ENCODE measurements at regions of chr13 and their contacts with region 1.

Region 1: GRCh38 chr13:98142380-98143156 is at the start of gene FARP1:
- DNase-seq: no peak
- ATAC-seq: peak; percentile 89
- H3K4me3 ChIP-seq: peak within 1 kb of the TSS; percentile 60; the same call in 1 of the 2 replicates
- H3K27ac ChIP-seq: no peak within 1 kb of the TSS
- H3K4me1 ChIP-seq: no peaks in the 10 kb centered on the region
- H3K27me3 ChIP-seq: peaks cover 4 to 7% of the 10 kb centered on the region in 2 experiments; a peak in 3 of 4 replicates
- CTCF ChIP-seq: peak in 2 of 3 experiments; percentile 13 to 45; a peak in 3 of 6 replicates
- EP300 ChIP-seq: no peak
- POLR2A ChIP-seq: no peak
- RAD21 ChIP-seq: no peak
- polyA plus RNA-seq, gene FARP1: 0.20 to 0.52 TPM

Region 2: GRCh38 chr13:98004111-98004510 is 138.5 kb before region 1 on chr13:
- CTCF ChIA-PET with region 1: no interaction called
- POLR2A ChIA-PET with region 1: no interaction called
- RAD21 ChIA-PET with region 1: no interaction called
- SMC1A ChIA-PET with region 1: no interaction called
- in situ Hi-C with region 1: no loop called
- intact Hi-C with region 1: no loop called
- DNase-seq: no peak
- ATAC-seq: no peak
- H3K4me3 ChIP-seq: no peak overlapping the region
- H3K27ac ChIP-seq: no peak overlapping the region
- H3K4me1 ChIP-seq: no peaks in the 10 kb centered on the region
- H3K27me3 ChIP-seq: no peaks in the 10 kb centered on the region
- CTCF ChIP-seq: no peak
- EP300 ChIP-seq: no peak
- POLR2A ChIP-seq: no peak
- RAD21 ChIP-seq: no peak

Region 3: GRCh38 chr13:98026457-98026857 is 116.1 kb before region 1 on chr13:
- CTCF ChIA-PET with region 1: no interaction called
- POLR2A ChIA-PET with region 1: no interaction called
- RAD21 ChIA-PET with region 1: no interaction called
- SMC1A ChIA-PET with region 1: no interaction called
- in situ Hi-C with region 1: no loop called
- intact Hi-C with region 1: no loop called
- DNase-seq: no peak
- ATAC-seq: no peak
- H3K4me3 ChIP-seq: no peak overlapping the region
- H3K27ac ChIP-seq: no peak overlapping the region
- H3K4me1 ChIP-seq: no peaks in the 10 kb centered on the region
- H3K27me3 ChIP-seq: no peaks in the 10 kb centered on the region
- CTCF ChIP-seq: no peak
- EP300 ChIP-seq: no peak
- POLR2A ChIP-seq: no peak
- RAD21 ChIP-seq: no peak

Region 4: GRCh38 chr13:98118865-98119264 is 23.7 kb before region 1 on chr13:
- CTCF ChIA-PET with region 1: no interaction called
- POLR2A ChIA-PET with region 1: no interaction called
- RAD21 ChIA-PET with region 1: no interaction called
- SMC1A ChIA-PET with region 1: no interaction called
- in situ Hi-C with region 1: no loop called
- intact Hi-C with region 1: no loop called
- DNase-seq: no peak
- ATAC-seq: no peak
- H3K4me3 ChIP-seq: no peak overlapping the region
- H3K27ac ChIP-seq: no peak overlapping the region
- H3K4me1 ChIP-seq: no peaks in the 10 kb centered on the region
- H3K27me3 ChIP-seq: no peaks in the 10 kb centered on the region
- CTCF ChIP-seq: no peak
- EP300 ChIP-seq: no peak
- POLR2A ChIP-seq: no peak
- RAD21 ChIP-seq: no peak

Region 5: GRCh38 chr13:98169331-98169730 is 26.8 kb after region 1 on chr13:
- CTCF ChIA-PET with region 1: no interaction called
- POLR2A ChIA-PET with region 1: no interaction called
- RAD21 ChIA-PET with region 1: no interaction called
- SMC1A ChIA-PET with region 1: no interaction called
- in situ Hi-C with region 1: no loop called
- intact Hi-C with region 1: no loop called
- DNase-seq: no peak
- ATAC-seq: no peak
- H3K4me3 ChIP-seq: no peak overlapping the region
- H3K27ac ChIP-seq: no peak overlapping the region
- H3K4me1 ChIP-seq: no peaks in the 10 kb centered on the region
- H3K27me3 ChIP-seq: no peaks in the 10 kb centered on the region
- CTCF ChIP-seq: no peak
- EP300 ChIP-seq: no peak
- POLR2A ChIP-seq: no peak
- RAD21 ChIP-seq: no peak

Region 6: DNA sequence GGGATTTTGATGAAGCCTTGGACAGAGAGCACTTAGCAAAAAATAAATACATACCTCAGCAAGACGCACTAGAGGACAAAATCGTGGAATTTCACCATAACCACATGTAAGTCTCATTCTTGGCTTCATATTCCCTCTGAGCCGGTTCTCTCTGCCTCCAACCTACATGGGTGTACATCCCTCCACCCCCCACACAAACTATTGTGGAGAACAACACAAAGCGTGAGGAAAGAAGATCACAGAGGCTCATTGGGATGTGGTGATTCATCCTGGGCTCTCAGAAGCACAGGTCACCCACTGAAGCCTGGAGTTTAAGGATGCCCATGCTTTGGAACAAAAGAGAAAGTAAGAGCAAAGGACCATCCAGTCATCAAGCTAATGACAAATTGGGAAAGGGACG is 242.2 kb after region 1 on chr13:
- CTCF ChIA-PET with region 1: no interaction called
- POLR2A ChIA-PET with region 1: no interaction called
- RAD21 ChIA-PET with region 1: interaction called, 4 read pairs
- SMC1A ChIA-PET with region 1: no interaction called
- in situ Hi-C with region 1: no loop called
- intact Hi-C with region 1: loop called (anchors 10 kb)
- DNase-seq: no peak
- ATAC-seq: no peak
- H3K4me3 ChIP-seq: no peak overlapping the region
- H3K27ac ChIP-seq: no peak overlapping the region
- H3K4me1 ChIP-seq: no peaks in the 10 kb centered on the region
- H3K27me3 ChIP-seq: no peaks in the 10 kb centered on the region; a peak in 1 of 4 replicates
- CTCF ChIP-seq: no peak
- EP300 ChIP-seq: no peak
- POLR2A ChIP-seq: no peak
- RAD21 ChIP-seq: no peak

Measured in GM12878 (cell line).